Psoas muscle (tissue), 8 donors: ENCODE measurements at regions of chr16 and their contacts with region 1.

Region 1: DNA sequence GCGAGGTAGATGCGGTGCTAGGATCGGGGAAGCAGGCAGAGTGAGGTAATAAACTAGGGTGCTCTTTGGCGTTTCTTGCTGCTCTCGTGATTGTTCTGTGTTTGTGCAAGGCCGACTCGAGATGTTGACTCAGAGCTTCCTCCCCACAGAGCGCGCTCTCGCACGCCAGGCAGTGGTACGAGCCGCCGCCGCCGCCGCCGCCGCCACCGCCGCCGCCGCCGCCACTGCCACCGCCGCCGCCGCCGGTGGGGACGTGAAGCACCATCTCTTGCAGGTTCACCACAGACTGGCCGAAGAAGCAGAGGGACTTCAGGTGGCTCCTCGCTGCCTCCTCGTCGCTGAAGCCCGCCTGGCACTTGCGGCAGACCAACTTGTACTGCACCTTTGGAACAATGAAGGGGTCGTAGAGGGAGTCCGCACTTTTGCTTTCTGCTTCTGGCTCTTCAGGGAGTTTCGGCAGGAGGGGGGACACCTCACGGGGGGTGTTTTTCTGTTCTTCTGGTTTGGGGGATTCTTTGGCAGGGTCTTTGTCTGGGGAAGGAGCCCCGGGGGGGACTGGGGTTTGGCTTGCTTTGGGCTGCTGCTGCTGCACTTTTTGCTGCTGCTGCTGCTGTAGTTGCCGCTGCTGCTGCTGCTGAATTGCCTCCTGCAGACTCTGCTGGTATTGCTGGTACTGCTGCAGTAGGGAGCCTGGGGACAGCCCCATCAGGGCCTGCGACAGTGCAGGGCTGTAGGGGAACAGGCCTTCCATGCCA is 260.2 kb downstream of the ZFHX3 start:
- DNase-seq: peak; percentile 53 to 74
- ATAC-seq: peak; percentile 23 to 69 (median 60)
- H3K4me3 ChIP-seq: peak overlapping the region; percentile 50
- H3K27ac ChIP-seq: peak overlapping the region; percentile 26
- H3K4me1 ChIP-seq: no peaks in the 10 kb centered on the region
- H3K27me3 ChIP-seq: no peaks in the 10 kb centered on the region
- CTCF ChIP-seq: no peak

Region 2: DNA sequence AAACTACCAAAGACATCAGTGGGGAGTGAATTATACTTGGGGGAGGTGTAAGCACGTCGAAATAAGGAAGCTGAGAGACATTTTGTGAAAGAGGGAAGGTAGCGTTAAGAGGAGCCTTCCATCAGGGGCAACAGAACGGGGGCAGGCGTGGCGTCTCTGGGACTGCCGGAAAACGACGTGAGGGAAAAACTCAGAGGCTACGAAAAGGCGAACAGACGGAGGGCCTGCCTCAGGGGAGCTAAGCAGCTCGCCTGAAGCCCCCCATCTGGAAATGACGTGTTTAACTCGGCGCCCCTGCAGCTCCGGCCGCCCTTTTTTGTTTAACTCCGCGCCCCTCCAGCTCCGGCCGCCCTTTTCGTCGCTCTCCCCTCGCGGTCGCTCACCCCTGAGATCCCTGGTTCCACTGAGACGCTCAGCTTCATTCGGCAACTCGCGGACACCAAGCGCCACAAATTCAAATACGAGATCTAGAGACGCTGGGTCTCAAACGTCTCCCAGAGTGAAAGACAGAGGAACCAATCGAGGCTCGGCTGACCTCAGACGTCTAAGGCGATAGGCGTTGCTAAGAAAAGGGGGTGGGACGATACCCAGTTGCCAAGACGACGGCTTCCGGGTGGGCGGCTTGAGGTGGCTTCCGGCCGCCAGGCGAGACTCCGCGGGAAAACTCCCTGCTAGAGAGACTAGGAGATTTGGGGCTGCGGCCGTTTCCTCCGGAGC is 123.0 kb before region 1 on chr16:
- intact Hi-C with region 1: loop called in 1 of 2 experiments (anchors 10 kb)
- DNase-seq: peak; percentile 93 to 96
- ATAC-seq: peak; percentile 100
- H3K4me3 ChIP-seq: peak overlapping the region; percentile 93
- H3K27ac ChIP-seq: peak overlapping the region; percentile 37
- H3K4me1 ChIP-seq: peaks cover 3% of the 10 kb centered on the region
- H3K27me3 ChIP-seq: peaks cover 0 to 5% (median 0%) of the 10 kb centered on the region in 3 donors
- CTCF ChIP-seq: no peak

Region 3: DNA sequence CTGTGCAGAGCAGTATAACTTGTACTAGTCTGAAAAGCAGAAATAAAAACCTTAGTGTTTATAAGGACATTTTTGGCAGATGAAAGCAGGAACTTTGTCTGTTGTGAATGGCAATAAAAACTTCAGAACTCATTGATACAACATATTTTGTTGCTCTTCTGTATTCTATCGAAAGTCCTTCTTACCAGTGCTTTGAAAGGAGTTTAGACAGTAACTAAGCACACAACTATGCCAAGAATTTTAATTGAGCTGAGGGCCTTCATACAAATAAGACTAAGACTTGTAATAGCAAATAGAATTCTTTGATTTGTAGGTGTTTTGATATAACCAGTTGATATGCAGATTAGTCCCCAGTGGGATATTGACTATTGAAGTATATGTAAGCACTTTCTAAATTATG is 48.1 kb before region 1 on chr16:
- intact Hi-C with region 1: no loop called
- DNase-seq: no peak
- ATAC-seq: no peak
- H3K4me3 ChIP-seq: no peak overlapping the region
- H3K27ac ChIP-seq: no peak overlapping the region
- H3K4me1 ChIP-seq: no peaks in the 10 kb centered on the region
- H3K27me3 ChIP-seq: no peaks in the 10 kb centered on the region
- CTCF ChIP-seq: no peak

Region 4: DNA sequence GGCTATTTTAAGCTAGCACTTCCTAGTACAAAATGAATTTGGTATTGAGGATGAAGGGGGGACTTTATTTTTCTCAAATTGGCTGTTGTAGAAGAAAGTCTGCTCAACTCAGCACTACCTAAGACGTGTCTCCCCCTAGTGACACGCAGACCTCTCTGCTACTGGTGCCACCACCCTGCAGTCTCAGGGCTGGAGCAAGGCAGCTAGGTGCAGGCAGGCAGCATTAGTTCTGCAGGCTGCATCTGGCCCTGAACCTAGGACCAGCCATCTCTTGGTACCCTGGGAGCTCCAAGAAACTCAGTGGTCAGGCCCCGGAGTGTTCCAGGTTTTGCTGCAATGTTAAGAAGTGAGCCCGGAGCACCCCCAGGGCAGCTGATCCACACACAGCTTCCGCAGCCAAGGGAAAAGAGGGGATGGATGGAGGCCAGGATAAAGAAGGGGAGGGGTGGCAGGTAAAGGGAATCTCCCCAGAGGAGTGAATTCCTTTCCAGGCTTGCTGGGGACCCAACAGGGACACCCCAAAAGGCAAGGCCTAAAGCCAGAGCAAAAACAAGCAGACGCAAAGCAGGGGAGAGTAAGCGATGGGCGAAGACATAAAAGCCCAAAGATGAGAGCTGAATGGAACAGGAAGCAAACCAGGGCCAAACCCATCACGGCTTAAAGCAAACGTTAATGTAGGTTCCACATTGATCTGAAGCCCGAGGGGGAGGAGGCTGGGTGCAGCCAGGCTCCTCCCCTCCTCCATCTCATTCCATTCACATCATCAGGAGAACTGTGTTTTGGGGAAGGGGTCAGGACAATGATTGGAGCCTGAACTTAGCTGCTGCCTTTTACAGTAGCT is 59.7 kb after region 1 on chr16:
- intact Hi-C with region 1: loop called in 1 of 2 experiments (anchors 10 kb)
- DNase-seq: no peak
- ATAC-seq: peak in 2 of 4 donors; percentile 37 to 40
- H3K4me3 ChIP-seq: no peak overlapping the region
- H3K27ac ChIP-seq: peak overlapping the region; percentile 73
- H3K4me1 ChIP-seq: peaks cover 52% of the 10 kb centered on the region
- H3K27me3 ChIP-seq: no peaks in the 10 kb centered on the region
- CTCF ChIP-seq: peak; percentile 40

Region 5: GRCh38 chr16:72884037-72884436 is 96.3 kb after region 1 on chr16:
- intact Hi-C with region 1: no loop called
- DNase-seq: no peak
- ATAC-seq: no peak
- H3K4me3 ChIP-seq: no peak overlapping the region
- H3K27ac ChIP-seq: no peak overlapping the region
- H3K4me1 ChIP-seq: peaks cover 4% of the 10 kb centered on the region
- H3K27me3 ChIP-seq: no peaks in the 10 kb centered on the region
- CTCF ChIP-seq: no peak